CD4-positive, alpha-beta memory T cell (primary cell): ENCODE measurements at regions of chr11 and their contacts with region 1.

Region 1: GRCh38 chr11:95705485-95706124 is 84.0 kb downstream of the FAM76B start:
- DNase-seq: peak; percentile 84 to 87 (median 85)
- H3K4me3 ChIP-seq: no peak overlapping the region
- H3K4me3 Mint-ChIP-seq: no peak overlapping the region
- H3K27ac ChIP-seq: no peak overlapping the region
- H3K27ac Mint-ChIP-seq: no peak overlapping the region
- H3K4me1 ChIP-seq: peaks cover 48% of the 10 kb centered on the region
- H3K4me1 Mint-ChIP-seq: peaks cover 6 to 10% (median 9%) of the 10 kb centered on the region in 4 donors
- H3K27me3 ChIP-seq: no peaks in the 10 kb centered on the region
- H3K27me3 Mint-ChIP-seq: peaks cover 0 to 3% of the 10 kb centered on the region in 2 donors

Region 2: GRCh38 chr11:95028357-95028756 is 677.2 kb before region 1 on chr11:
- CTCF ChIA-PET with region 1: no interaction called
- POLR2A ChIA-PET with region 1: no interaction called
- intact Hi-C with region 1: no loop called
- DNase-seq: no peak
- H3K4me3 ChIP-seq: no peak overlapping the region
- H3K4me3 Mint-ChIP-seq: no peak overlapping the region
- H3K27ac ChIP-seq: no peak overlapping the region
- H3K27ac Mint-ChIP-seq: no peak overlapping the region
- H3K4me1 ChIP-seq: no peaks in the 10 kb centered on the region
- H3K4me1 Mint-ChIP-seq: no peaks in the 10 kb centered on the region
- H3K27me3 ChIP-seq: no peaks in the 10 kb centered on the region
- H3K27me3 Mint-ChIP-seq: peaks cover 1 to 7% of the 10 kb centered on the region in 2 donors

Region 3: GRCh38 chr11:95150946-95151684 is 554.5 kb before region 1 on chr11:
- CTCF ChIA-PET with region 1: interaction called, 446 read pairs
- POLR2A ChIA-PET with region 1: interaction called, 53 read pairs
- intact Hi-C with region 1: loop called (anchors 1 kb)
- DNase-seq: peak; percentile 91 to 93 (median 91)
- H3K4me3 ChIP-seq: peak overlapping the region; percentile 45 to 87
- H3K4me3 Mint-ChIP-seq: peak overlapping the region; percentile 85 to 96 (median 90)
- H3K27ac ChIP-seq: peak overlapping the region; percentile 80
- H3K27ac Mint-ChIP-seq: peak overlapping the region; percentile 90 to 99 (median 97)
- H3K4me1 ChIP-seq: peaks cover 35% of the 10 kb centered on the region
- H3K4me1 Mint-ChIP-seq: peaks cover 26 to 44% (median 36%) of the 10 kb centered on the region in 4 donors
- H3K27me3 ChIP-seq: no peaks in the 10 kb centered on the region
- H3K27me3 Mint-ChIP-seq: peaks cover 2 to 8% of the 10 kb centered on the region in 2 donors

Region 4: GRCh38 chr11:95193541-95193940 is 512.1 kb before region 1 on chr11:
- CTCF ChIA-PET with region 1: interaction called, 13 read pairs
- POLR2A ChIA-PET with region 1: no interaction called
- intact Hi-C with region 1: no loop called
- DNase-seq: no peak
- H3K4me3 ChIP-seq: no peak overlapping the region
- H3K4me3 Mint-ChIP-seq: no peak overlapping the region
- H3K27ac ChIP-seq: no peak overlapping the region
- H3K27ac Mint-ChIP-seq: peak overlapping the region in 1 of 7 donors; percentile 13
- H3K4me1 ChIP-seq: no peaks in the 10 kb centered on the region
- H3K4me1 Mint-ChIP-seq: peaks cover 21 to 35% (median 27%) of the 10 kb centered on the region in 4 donors
- H3K27me3 ChIP-seq: no peaks in the 10 kb centered on the region
- H3K27me3 Mint-ChIP-seq: no peaks in the 10 kb centered on the region

Region 5: DNA sequence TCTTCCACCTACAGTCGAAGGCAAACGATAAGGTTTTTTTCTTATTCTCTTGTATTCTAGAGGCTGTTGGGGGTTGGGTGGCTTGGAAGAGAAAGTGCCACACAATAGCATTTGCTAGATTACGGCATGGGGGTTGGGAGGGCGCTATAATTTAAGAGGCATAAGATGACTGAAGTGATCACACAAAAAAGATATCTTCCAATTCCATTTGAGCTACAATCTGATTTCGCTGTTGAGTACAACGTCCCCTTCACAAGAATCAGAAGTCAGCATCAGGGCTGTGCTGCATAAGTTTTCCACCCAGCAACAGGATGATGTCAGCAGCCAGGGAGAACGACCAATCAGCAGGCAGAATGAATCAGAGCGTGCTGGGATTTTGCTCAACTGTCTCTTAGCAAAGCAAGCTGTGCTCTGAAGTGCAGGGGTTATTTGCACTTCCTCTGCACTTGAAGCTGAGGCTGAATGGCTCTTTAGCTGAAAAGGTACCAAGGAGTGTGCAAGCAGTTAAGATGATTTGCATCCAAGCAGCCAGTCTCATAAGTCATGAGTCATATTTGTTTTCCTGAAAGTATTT is 451.4 kb before region 1 on chr11:
- CTCF ChIA-PET with region 1: interaction called, 20 read pairs
- POLR2A ChIA-PET with region 1: interaction called, 3 read pairs
- intact Hi-C with region 1: loop called (anchors 1 kb)
- DNase-seq: peak; percentile 79 to 88 (median 81)
- H3K4me3 ChIP-seq: peak overlapping the region; percentile 26 to 36
- H3K4me3 Mint-ChIP-seq: peak overlapping the region; percentile 88 to 96 (median 92)
- H3K27ac ChIP-seq: peak overlapping the region; percentile 49
- H3K27ac Mint-ChIP-seq: peak overlapping the region; percentile 91 to 99 (median 95)
- H3K4me1 ChIP-seq: peaks cover 38% of the 10 kb centered on the region
- H3K4me1 Mint-ChIP-seq: peaks cover 23 to 42% (median 36%) of the 10 kb centered on the region in 4 donors
- H3K27me3 ChIP-seq: no peaks in the 10 kb centered on the region
- H3K27me3 Mint-ChIP-seq: peaks cover 0 to 2% of the 10 kb centered on the region in 2 donors

Region 6: GRCh38 chr11:95507794-95508193 is 197.8 kb before region 1 on chr11:
- CTCF ChIA-PET with region 1: interaction called, 13 read pairs
- POLR2A ChIA-PET with region 1: no interaction called
- intact Hi-C with region 1: loop called (anchors 2 kb)
- DNase-seq: no peak
- H3K4me3 ChIP-seq: no peak overlapping the region
- H3K4me3 Mint-ChIP-seq: no peak overlapping the region
- H3K27ac ChIP-seq: no peak overlapping the region
- H3K27ac Mint-ChIP-seq: no peak overlapping the region
- H3K4me1 ChIP-seq: no peaks in the 10 kb centered on the region
- H3K4me1 Mint-ChIP-seq: peaks cover 0 to 6% (median 0%) of the 10 kb centered on the region in 4 donors
- H3K27me3 ChIP-seq: no peaks in the 10 kb centered on the region
- H3K27me3 Mint-ChIP-seq: peaks cover 1 to 3% of the 10 kb centered on the region in 2 donors

Region 7: GRCh38 chr11:95680169-95680929 is 25.3 kb before region 1 on chr11:
- CTCF ChIA-PET with region 1: interaction called, 20 read pairs
- POLR2A ChIA-PET with region 1: interaction called, 10 read pairs
- intact Hi-C with region 1: no loop called
- DNase-seq: no peak
- H3K4me3 ChIP-seq: no peak overlapping the region
- H3K4me3 Mint-ChIP-seq: peak overlapping the region; percentile 7 to 72 (median 64)
- H3K27ac ChIP-seq: no peak overlapping the region
- H3K27ac Mint-ChIP-seq: peak overlapping the region; percentile 17 to 83 (median 68)
- H3K4me1 ChIP-seq: peaks cover 42% of the 10 kb centered on the region
- H3K4me1 Mint-ChIP-seq: peaks cover 17 to 81% (median 51%) of the 10 kb centered on the region in 4 donors
- H3K27me3 ChIP-seq: no peaks in the 10 kb centered on the region
- H3K27me3 Mint-ChIP-seq: no peaks in the 10 kb centered on the region

Region 8: DNA sequence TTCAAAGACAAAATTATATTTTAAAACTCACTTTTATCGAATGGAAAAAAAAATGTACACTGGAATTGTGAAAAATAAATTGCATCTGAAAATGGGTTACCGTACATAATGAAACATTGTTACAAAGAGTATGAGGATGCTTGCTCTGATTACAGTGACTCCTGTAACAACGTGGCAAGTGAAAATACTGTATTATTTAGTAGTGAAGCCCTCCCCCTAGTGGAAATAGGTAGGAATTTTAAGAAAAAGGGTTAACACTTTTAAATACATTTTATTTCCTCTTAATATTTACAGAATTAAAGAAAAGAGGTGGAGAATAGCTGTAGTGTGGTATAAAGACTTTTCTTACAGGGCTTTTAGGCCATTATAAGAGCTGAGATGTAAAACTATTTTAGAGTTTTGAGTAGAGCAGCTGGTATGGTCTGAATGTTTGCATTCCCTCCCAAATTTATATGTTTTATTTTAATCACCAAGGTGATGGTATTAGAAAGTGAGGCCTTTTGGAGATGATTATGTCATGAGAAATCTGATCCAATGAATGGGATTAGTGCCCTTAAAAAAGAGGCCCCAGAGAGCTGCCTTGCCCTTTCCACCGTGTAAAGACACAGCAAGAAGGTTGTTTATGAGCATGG is 58.8 kb after region 1 on chr11:
- CTCF ChIA-PET with region 1: interaction called, 33 read pairs
- POLR2A ChIA-PET with region 1: interaction called, 3 read pairs
- intact Hi-C with region 1: loop called (anchors 1 kb)
- DNase-seq: peak in 4 of 5 donors; percentile 65 to 69 (median 67)
- H3K4me3 ChIP-seq: no peak overlapping the region
- H3K4me3 Mint-ChIP-seq: no peak overlapping the region
- H3K27ac ChIP-seq: no peak overlapping the region
- H3K27ac Mint-ChIP-seq: no peak overlapping the region
- H3K4me1 ChIP-seq: no peaks in the 10 kb centered on the region
- H3K4me1 Mint-ChIP-seq: no peaks in the 10 kb centered on the region
- H3K27me3 ChIP-seq: no peaks in the 10 kb centered on the region
- H3K27me3 Mint-ChIP-seq: peaks cover 0 to 2% of the 10 kb centered on the region in 2 donors

Region 9: GRCh38 chr11:95835768-95836488 is 130.3 kb after region 1 on chr11:
- CTCF ChIA-PET with region 1: no interaction called
- POLR2A ChIA-PET with region 1: no interaction called
- intact Hi-C with region 1: no loop called
- DNase-seq: peak; percentile 55 to 64 (median 55)
- H3K4me3 ChIP-seq: no peak overlapping the region
- H3K4me3 Mint-ChIP-seq: no peak overlapping the region
- H3K27ac ChIP-seq: no peak overlapping the region
- H3K27ac Mint-ChIP-seq: peak overlapping the region in 4 of 7 donors; percentile 1 to 75 (median 51)
- H3K4me1 ChIP-seq: no peaks in the 10 kb centered on the region
- H3K4me1 Mint-ChIP-seq: peaks cover 0 to 3% (median 1%) of the 10 kb centered on the region in 4 donors
- H3K27me3 ChIP-seq: no peaks in the 10 kb centered on the region
- H3K27me3 Mint-ChIP-seq: no peaks in the 10 kb centered on the region

Region 10: GRCh38 chr11:96014217-96014616 is 308.6 kb after region 1 on chr11:
- CTCF ChIA-PET with region 1: no interaction called
- POLR2A ChIA-PET with region 1: no interaction called
- intact Hi-C with region 1: no loop called
- DNase-seq: peak; percentile 60 to 83 (median 70)
- H3K4me3 ChIP-seq: peak overlapping the region in 1 of 2 donors; percentile 8
- H3K4me3 Mint-ChIP-seq: peak overlapping the region; percentile 63 to 86 (median 74)
- H3K27ac ChIP-seq: peak overlapping the region; percentile 44
- H3K27ac Mint-ChIP-seq: peak overlapping the region; percentile 88 to 97 (median 94)
- H3K4me1 ChIP-seq: peaks cover 59% of the 10 kb centered on the region
- H3K4me1 Mint-ChIP-seq: peaks cover 9 to 64% (median 52%) of the 10 kb centered on the region in 4 donors
- H3K27me3 ChIP-seq: no peaks in the 10 kb centered on the region
- H3K27me3 Mint-ChIP-seq: no peaks in the 10 kb centered on the region